ENCODE measurements at regions of chr2 and their contacts with region 1.

Region 1: GRCh38 chr2:88590998-88591613 is 36.2 kb downstream of the EIF2AK3 start:
- DNase-seq: peak; percentile 30 to 58 (median 49)
- H3K4me3 ChIP-seq: no peak overlapping the region
- H3K4me3 Mint-ChIP-seq: no peak overlapping the region
- H3K27ac ChIP-seq: no peak overlapping the region
- H3K27ac Mint-ChIP-seq: peak overlapping the region in 3 of 7 donors; percentile 21 to 60 (median 22)
- H3K4me1 ChIP-seq: no peaks in the 10 kb centered on the region
- H3K4me1 Mint-ChIP-seq: no peaks in the 10 kb centered on the region
- H3K27me3 ChIP-seq: no peaks in the 10 kb centered on the region
- H3K27me3 Mint-ChIP-seq: no peaks in the 10 kb centered on the region
- CTCF ChIP-seq: peak; percentile 80

Region 2: DNA sequence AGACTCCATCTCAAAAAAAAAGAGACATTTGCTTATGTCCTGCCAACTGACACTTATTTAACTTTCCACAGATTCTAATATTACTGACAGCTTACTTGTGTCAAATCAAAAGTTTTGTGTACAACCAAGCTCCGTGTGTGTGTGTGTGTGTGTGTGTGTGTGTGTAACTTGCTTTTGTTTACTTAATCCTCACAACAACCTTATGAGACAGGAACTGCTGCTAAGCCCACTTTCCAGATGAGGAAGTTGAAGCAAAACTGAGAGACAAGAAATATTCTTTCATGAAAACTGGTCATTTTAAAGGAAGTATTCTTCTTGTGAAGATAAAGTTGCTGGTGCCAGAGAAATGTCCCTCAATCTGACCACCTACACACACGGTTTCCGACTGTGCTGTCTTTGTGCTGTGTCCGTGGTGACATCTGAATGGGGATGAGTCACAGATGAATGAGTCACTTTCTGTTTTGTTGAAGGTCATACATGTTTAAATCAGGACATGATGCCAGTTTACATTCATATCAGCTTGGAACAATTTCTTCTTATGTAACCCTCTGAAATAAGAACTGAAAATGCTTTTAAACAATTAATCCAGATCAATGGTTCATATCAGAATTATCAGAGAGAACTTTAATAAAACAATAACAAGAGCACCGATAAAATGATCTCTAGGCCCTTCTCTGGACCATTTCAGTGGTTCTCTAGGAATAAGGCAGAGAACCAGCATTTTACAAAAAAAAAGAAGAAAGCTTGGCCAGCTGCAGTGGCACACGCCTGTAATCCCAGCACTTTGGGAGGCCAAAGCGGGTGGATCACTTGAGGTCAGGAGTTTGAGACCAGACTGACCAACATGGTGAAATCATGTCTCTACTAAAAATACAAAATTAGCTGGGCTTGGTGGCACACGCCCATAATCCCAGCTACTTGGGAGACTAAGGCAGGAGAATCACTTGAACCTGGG is 325.5 kb before region 1 on chr2:
- intact Hi-C with region 1: no loop called
- DNase-seq: peak; percentile 43 to 77 (median 76)
- H3K4me3 ChIP-seq: no peak overlapping the region
- H3K4me3 Mint-ChIP-seq: peak overlapping the region in 1 of 2 donors; percentile 36
- H3K27ac ChIP-seq: peak overlapping the region in 1 of 2 donors; percentile 10
- H3K27ac Mint-ChIP-seq: peak overlapping the region in 3 of 7 donors; percentile 39 to 74 (median 71)
- H3K4me1 ChIP-seq: no peaks in the 10 kb centered on the region
- H3K4me1 Mint-ChIP-seq: peaks cover 5% of the 10 kb centered on the region
- H3K27me3 ChIP-seq: no peaks in the 10 kb centered on the region
- H3K27me3 Mint-ChIP-seq: peaks cover 1 to 5% (median 2%) of the 10 kb centered on the region in 3 donors
- CTCF ChIP-seq: no peak

Region 3: GRCh38 chr2:88669371-88670214 is 78.5 kb after region 1 on chr2:
- intact Hi-C with region 1: loop called (anchors 2 to 5 kb)
- DNase-seq: peak in 2 of 3 donors; percentile 23 to 30
- H3K4me3 ChIP-seq: no peak overlapping the region
- H3K4me3 Mint-ChIP-seq: no peak overlapping the region
- H3K27ac ChIP-seq: no peak overlapping the region
- H3K27ac Mint-ChIP-seq: no peak overlapping the region
- H3K4me1 ChIP-seq: no peaks in the 10 kb centered on the region
- H3K4me1 Mint-ChIP-seq: no peaks in the 10 kb centered on the region
- H3K27me3 ChIP-seq: no peaks in the 10 kb centered on the region
- H3K27me3 Mint-ChIP-seq: peaks cover 0 to 9% (median 1%) of the 10 kb centered on the region in 3 donors
- CTCF ChIP-seq: peak; percentile 55

Region 4: GRCh38 chr2:88691339-88692183 is 100.5 kb after region 1 on chr2 and contains the start of gene RPIA:
- intact Hi-C with region 1: loop called in 1 of 2 experiments (anchors 5 kb)
- DNase-seq: peak; percentile 98
- H3K4me3 ChIP-seq: peak within 1 kb of the TSS; percentile 85 to 91 (median 86)
- H3K4me3 Mint-ChIP-seq: peak within 1 kb of the TSS; percentile 90 to 95
- H3K27ac ChIP-seq: peak within 1 kb of the TSS; percentile 60 to 86
- H3K27ac Mint-ChIP-seq: peak within 1 kb of the TSS; percentile 91 to 96 (median 95)
- H3K4me1 ChIP-seq: peaks cover 33 to 34% of the 10 kb centered on the region in 2 donors
- H3K4me1 Mint-ChIP-seq: peaks cover 41% of the 10 kb centered on the region
- H3K27me3 ChIP-seq: no peaks in the 10 kb centered on the region
- H3K27me3 Mint-ChIP-seq: peaks cover 0 to 4% (median 3%) of the 10 kb centered on the region in 3 donors
- CTCF ChIP-seq: peak; percentile 71
- polyA plus RNA-seq, gene RPIA: 12.4 to 23.1 (median 17.9) TPM

Measured in CD14-positive monocyte (primary cell).